Activated CD8-positive, alpha-beta T cell treated with anti-CD3 and anti-CD28 coated beads for 36 hours (primary cell): ENCODE measurements at regions of chr1 and their contacts with region 1.

Region 1: GRCh38 chr1:156625436-156626078 is 6.3 kb downstream of the HAPLN2 start:
- DNase-seq: peak; percentile 74
- ATAC-seq: peak; percentile 74
- H3K4me3 Mint-ChIP-seq: peak overlapping the region; percentile 53
- H3K27ac Mint-ChIP-seq: no peak overlapping the region
- H3K4me1 Mint-ChIP-seq: peaks cover 10% of the 10 kb centered on the region
- H3K27me3 Mint-ChIP-seq: peaks cover 37% of the 10 kb centered on the region
- CTCF ChIP-seq: peak; percentile 96

Region 2: GRCh38 chr1:156502391-156502745 is 123.2 kb before region 1 on chr1:
- CTCF ChIA-PET with region 1: no interaction called
- POLR2A ChIA-PET with region 1: no interaction called
- intact Hi-C with region 1: no loop called
- DNase-seq: no peak
- ATAC-seq: no peak
- H3K4me3 Mint-ChIP-seq: peak overlapping the region; percentile 72
- H3K27ac Mint-ChIP-seq: peak overlapping the region; percentile 95
- H3K4me1 Mint-ChIP-seq: peaks cover 69% of the 10 kb centered on the region
- H3K27me3 Mint-ChIP-seq: no peaks in the 10 kb centered on the region
- CTCF ChIP-seq: no peak

Region 3: GRCh38 chr1:156641761-156642264 is 16.3 kb after region 1 on chr1 and contains the start of gene BCAN:
- CTCF ChIA-PET with region 1: interaction called, 146 read pairs
- POLR2A ChIA-PET with region 1: interaction called, 3 read pairs
- intact Hi-C with region 1: no loop called
- DNase-seq: peak; percentile 41
- ATAC-seq: peak; percentile 26
- H3K4me3 Mint-ChIP-seq: peak within 1 kb of the TSS; percentile 10
- H3K27ac Mint-ChIP-seq: no peak within 1 kb of the TSS
- H3K4me1 Mint-ChIP-seq: peaks cover 20% of the 10 kb centered on the region
- H3K27me3 Mint-ChIP-seq: peaks cover 78% of the 10 kb centered on the region
- CTCF ChIP-seq: no peak
- total RNA-seq, gene BCAN: not detected

Region 4: DNA sequence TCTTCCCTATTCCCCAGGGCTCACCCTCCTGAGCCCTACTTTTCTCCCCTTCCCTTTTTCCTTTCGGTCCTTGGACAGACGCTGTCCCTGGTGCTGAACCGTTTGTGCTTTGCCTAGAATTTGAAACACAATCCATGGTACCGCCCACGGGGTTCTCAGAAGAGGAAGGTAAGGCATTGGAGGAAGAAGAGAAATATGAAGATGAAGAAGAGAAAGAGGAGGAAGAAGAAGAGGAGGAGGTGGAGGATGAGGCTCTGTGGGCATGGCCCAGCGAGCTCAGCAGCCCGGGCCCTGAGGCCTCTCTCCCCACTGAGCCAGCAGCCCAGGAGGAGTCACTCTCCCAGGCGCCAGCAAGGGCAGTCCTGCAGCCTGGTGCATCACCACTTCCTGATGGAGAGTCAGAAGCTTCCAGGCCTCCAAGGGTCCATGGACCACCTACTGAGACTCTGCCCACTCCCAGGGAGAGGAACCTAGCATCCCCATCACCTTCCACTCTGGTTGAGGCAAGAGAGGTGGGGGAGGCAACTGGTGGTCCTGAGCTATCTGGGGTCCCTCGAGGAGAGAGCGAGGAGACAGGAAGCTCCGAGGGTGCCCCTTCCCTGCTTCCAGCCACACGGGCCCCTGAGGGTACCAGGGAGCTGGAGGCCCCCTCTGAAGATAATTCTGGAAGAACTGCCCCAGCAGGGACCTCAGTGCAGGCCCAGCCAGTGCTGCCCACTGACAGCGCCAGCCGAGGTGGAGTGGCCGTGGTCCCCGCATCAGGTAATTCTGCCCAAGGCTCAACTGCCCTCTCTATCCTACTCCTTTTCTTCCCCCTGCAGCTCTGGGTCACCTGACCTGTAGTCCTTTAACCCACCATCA is 26.8 kb after region 1 on chr1:
- CTCF ChIA-PET with region 1: interaction called, 273 read pairs
- POLR2A ChIA-PET with region 1: interaction called, 3 read pairs
- intact Hi-C with region 1: loop called (anchors 5 kb)
- DNase-seq: peak; percentile 35
- ATAC-seq: no peak
- H3K4me3 Mint-ChIP-seq: no peak overlapping the region
- H3K27ac Mint-ChIP-seq: no peak overlapping the region
- H3K4me1 Mint-ChIP-seq: peaks cover 9% of the 10 kb centered on the region
- H3K27me3 Mint-ChIP-seq: peaks cover 74% of the 10 kb centered on the region
- CTCF ChIP-seq: no peak

Region 5: DNA sequence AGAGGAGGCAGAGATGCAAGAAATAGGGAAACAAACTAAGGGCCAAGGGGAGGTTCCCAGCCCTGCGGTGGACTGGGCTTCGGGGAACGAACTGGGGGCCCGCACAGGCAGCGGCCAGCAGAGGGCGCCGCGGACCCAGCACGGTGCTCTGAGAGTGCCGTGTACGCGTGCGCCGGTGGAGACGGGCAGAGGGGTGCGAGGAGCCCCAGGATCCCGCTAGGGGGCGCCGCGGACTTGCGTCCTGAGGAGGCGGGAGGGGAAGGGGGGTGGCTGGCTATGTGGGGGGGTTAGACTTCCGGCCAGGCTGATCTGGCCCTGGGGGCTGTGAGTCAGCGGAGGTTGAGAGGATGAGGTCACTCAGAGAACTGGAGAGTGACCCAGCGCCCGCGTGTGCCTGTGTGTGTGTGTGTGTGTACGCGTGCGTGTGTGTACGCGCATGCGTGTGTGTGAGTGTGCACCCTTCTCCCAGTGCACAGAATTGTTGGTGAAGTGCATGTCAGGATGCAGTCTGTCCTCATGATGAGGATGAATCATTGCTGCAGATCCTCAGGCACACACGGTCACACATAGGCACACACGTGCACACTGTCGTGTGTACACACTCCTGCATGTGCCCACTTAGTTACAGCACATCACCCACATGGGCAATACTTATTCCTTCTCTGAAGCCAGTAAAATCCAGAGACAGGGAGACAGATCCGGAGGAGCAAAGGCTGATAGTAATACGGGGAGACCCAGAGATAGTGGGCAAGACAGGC is 34.6 kb after region 1 on chr1:
- CTCF ChIA-PET with region 1: interaction called, 273 read pairs
- POLR2A ChIA-PET with region 1: interaction called, 3 read pairs
- intact Hi-C with region 1: loop called (anchors 5 kb)
- DNase-seq: peak; percentile 97
- ATAC-seq: peak; percentile 88
- H3K4me3 Mint-ChIP-seq: peak overlapping the region; percentile 75
- H3K27ac Mint-ChIP-seq: peak overlapping the region; percentile 89
- H3K4me1 Mint-ChIP-seq: peaks cover 45% of the 10 kb centered on the region
- H3K27me3 Mint-ChIP-seq: peaks cover 27% of the 10 kb centered on the region
- CTCF ChIP-seq: peak; percentile 98

Region 6: DNA sequence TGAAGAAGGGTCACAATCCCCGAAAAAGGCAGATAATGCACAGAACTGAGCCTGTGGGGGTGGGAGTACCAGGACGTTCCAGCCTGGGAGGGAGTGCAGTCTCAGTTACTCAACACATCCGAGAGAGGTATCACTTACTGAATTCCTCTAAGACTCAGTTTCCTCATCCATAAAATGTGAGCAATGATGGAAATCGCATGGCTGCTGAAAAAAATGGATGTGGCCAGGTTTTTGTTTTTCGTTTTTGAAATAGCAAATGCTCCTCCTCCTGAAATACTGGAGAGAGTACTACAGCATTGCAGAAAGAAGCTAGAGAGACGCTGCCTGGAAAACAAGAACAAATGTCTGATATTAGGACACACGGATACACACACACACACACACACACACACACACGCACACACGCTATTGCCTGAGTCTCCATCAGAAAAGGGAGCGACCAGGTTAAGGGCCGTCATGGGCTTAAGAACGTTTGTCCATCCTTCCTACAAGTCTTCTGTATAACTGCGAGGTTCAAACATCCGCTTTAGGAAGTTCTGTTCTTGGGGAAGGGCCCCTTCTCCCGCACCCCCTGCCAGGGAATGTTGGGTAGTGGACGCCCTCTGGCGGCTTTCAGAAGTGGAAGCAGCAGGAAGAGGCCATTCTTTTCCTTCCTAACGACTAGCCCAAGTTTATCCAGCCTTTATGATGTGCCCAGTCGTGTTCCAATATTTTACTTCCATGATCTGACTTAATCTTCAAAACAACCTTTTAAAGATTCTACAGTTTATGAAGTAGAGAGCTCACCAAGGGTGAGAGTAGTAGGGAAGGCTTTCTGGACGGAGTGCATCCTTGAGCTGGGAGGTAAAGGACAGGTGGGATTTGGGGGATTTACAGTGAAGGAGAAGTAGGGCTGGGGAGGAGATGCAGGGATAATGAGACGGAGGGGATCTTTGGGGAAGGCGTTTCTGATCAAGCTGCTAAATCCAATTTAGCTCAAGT is 52.3 kb after region 1 on chr1:
- CTCF ChIA-PET with region 1: interaction called, 85 read pairs
- POLR2A ChIA-PET with region 1: no interaction called
- intact Hi-C with region 1: no loop called
- DNase-seq: peak; percentile 53
- ATAC-seq: peak; percentile 45
- H3K4me3 Mint-ChIP-seq: no peak overlapping the region
- H3K27ac Mint-ChIP-seq: no peak overlapping the region
- H3K4me1 Mint-ChIP-seq: peaks cover 14% of the 10 kb centered on the region
- H3K27me3 Mint-ChIP-seq: peaks cover 59% of the 10 kb centered on the region
- CTCF ChIP-seq: peak; percentile 82

Region 7: GRCh38 chr1:156705918-156706656 is 80.5 kb after region 1 on chr1:
- CTCF ChIA-PET with region 1: interaction called, 23 read pairs
- POLR2A ChIA-PET with region 1: interaction called, 3 read pairs
- intact Hi-C with region 1: no loop called
- DNase-seq: peak; percentile 87
- ATAC-seq: peak; percentile 67
- H3K4me3 Mint-ChIP-seq: peak overlapping the region; percentile 75
- H3K27ac Mint-ChIP-seq: peak overlapping the region; percentile 75
- H3K4me1 Mint-ChIP-seq: peaks cover 34% of the 10 kb centered on the region
- H3K27me3 Mint-ChIP-seq: peaks cover 19% of the 10 kb centered on the region
- CTCF ChIP-seq: peak; percentile 99